ENCODE measurements at regions of chr3 and their contacts with region 1.

Region 1: GRCh38 chr3:57100046-57100695 is 39.7 kb downstream of the SPATA12 start:
- DNase-seq: peak; percentile 81
- ATAC-seq: peak; percentile 94
- H3K4me3 Mint-ChIP-seq: no peak overlapping the region
- H3K27ac Mint-ChIP-seq: no peak overlapping the region
- H3K4me1 Mint-ChIP-seq: peaks cover 3% of the 10 kb centered on the region
- H3K27me3 Mint-ChIP-seq: peaks cover 2% of the 10 kb centered on the region

Region 2: GRCh38 chr3:57158813-57159738 is 58.9 kb after region 1 on chr3:
- CTCF ChIA-PET with region 1: interaction called, 4 read pairs
- POLR2A ChIA-PET with region 1: no interaction called
- intact Hi-C with region 1: loop called in 1 of 2 experiments (anchors 5 kb)
- DNase-seq: no peak
- ATAC-seq: no peak
- H3K4me3 Mint-ChIP-seq: no peak overlapping the region
- H3K27ac Mint-ChIP-seq: no peak overlapping the region
- H3K4me1 Mint-ChIP-seq: peaks cover 11% of the 10 kb centered on the region
- H3K27me3 Mint-ChIP-seq: peaks cover 39% of the 10 kb centered on the region